Activated CD4-positive, alpha-beta memory T cell treated with anti-CD3 and anti-CD28 coated beads for 36 hours (primary cell): ENCODE measurements at regions of chr17 and their contacts with region 1.

Region 1: DNA sequence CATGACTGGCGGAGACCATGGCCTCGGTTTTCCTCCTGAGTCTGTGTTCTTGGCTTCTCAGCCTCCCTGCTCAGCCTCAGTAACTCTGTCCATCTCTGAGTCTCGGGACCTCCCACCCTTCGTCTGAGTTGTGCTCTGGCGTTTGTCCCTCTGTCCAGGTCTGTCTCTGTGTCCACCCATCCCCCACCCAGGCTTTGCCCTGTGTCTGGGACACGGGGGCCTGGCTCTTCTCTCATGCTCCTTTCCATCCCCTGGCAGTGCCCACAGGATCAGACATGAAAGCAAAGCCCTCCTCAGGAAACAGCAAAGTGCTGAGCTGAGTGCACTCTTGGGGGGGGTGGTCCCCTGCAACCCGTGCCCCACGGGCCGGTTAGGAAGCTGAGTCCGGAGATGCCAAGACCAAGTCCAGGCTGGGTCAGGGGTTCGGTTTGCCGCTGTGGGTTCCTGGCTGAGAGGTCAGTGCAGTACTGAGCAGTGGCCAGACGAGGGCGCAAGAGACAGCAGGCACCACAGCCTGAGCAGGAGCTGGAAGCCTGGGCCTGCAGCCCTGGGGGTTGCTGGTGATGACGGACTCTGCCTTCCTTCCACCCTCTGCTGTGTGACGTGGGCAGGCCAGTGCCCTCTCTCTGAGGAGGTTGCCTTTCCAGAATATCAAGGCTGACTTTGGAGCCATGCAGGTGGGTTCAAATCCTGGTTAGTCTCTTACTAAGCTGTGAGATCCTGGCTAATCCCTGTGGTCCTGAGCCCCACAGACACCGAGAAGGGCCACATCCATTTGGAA is 2.5 kb downstream of the P2RX1 start:
- DNase-seq: peak; percentile 89
- H3K4me3 Mint-ChIP-seq: no peak overlapping the region
- H3K27ac Mint-ChIP-seq: peak overlapping the region; percentile 54
- H3K4me1 Mint-ChIP-seq: peaks cover 39% of the 10 kb centered on the region
- H3K27me3 Mint-ChIP-seq: no peaks in the 10 kb centered on the region

Region 2: GRCh38 chr17:3845621-3846441 is 67.9 kb before region 1 on chr17 and contains the start of gene NCBP3:
- CTCF ChIA-PET with region 1: interaction called, 39 read pairs
- POLR2A ChIA-PET with region 1: no interaction called
- intact Hi-C with region 1: loop called (anchors 5 kb)
- DNase-seq: peak; percentile 93
- H3K4me3 Mint-ChIP-seq: peak within 1 kb of the TSS; percentile 94
- H3K27ac Mint-ChIP-seq: peak within 1 kb of the TSS; percentile 86
- H3K4me1 Mint-ChIP-seq: peaks cover 22% of the 10 kb centered on the region
- H3K27me3 Mint-ChIP-seq: no peaks in the 10 kb centered on the region
- total RNA-seq, gene NCBP3: 38.8 to 42.4 TPM

Region 3: GRCh38 chr17:3865176-3865575 is 48.5 kb before region 1 on chr17:
- CTCF ChIA-PET with region 1: interaction called, 17 read pairs
- POLR2A ChIA-PET with region 1: no interaction called
- intact Hi-C with region 1: loop called (anchors 5 kb)
- DNase-seq: no peak
- H3K4me3 Mint-ChIP-seq: no peak overlapping the region
- H3K27ac Mint-ChIP-seq: no peak overlapping the region
- H3K4me1 Mint-ChIP-seq: no peaks in the 10 kb centered on the region
- H3K27me3 Mint-ChIP-seq: no peaks in the 10 kb centered on the region

Region 4: GRCh38 chr17:3935140-3935542 is 21.4 kb after region 1 on chr17:
- CTCF ChIA-PET with region 1: interaction called, 10 read pairs
- POLR2A ChIA-PET with region 1: no interaction called
- intact Hi-C with region 1: no loop called
- DNase-seq: peak; percentile 40
- H3K4me3 Mint-ChIP-seq: no peak overlapping the region
- H3K27ac Mint-ChIP-seq: no peak overlapping the region
- H3K4me1 Mint-ChIP-seq: no peaks in the 10 kb centered on the region
- H3K27me3 Mint-ChIP-seq: no peaks in the 10 kb centered on the region

Region 5: DNA sequence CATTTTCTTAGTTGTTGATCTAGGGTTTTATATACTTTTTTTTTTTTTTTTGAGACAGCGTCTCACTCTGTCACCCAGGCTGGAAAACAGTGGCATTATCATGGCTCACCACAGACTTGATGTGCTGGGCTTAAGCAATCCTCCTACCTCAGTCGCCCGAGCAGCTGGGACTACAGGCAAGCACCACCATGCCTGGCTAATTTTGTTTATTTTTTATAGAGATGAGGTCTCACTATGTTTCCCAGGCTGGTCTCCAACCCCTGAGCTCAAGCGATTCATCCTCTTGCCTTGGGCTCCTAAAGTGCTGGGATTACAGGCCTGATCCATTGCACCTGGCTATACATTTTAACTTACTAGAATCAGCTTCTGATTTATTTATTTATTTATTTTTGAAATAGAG is 84.7 kb after region 1 on chr17:
- CTCF ChIA-PET with region 1: interaction called, 91 read pairs
- POLR2A ChIA-PET with region 1: no interaction called
- intact Hi-C with region 1: no loop called
- DNase-seq: no peak
- H3K4me3 Mint-ChIP-seq: no peak overlapping the region
- H3K27ac Mint-ChIP-seq: no peak overlapping the region
- H3K4me1 Mint-ChIP-seq: no peaks in the 10 kb centered on the region
- H3K27me3 Mint-ChIP-seq: peaks cover 8% of the 10 kb centered on the region

Region 6: GRCh38 chr17:4074831-4075495 is 161.2 kb after region 1 on chr17:
- CTCF ChIA-PET with region 1: interaction called, 19 read pairs
- POLR2A ChIA-PET with region 1: no interaction called
- intact Hi-C with region 1: loop called (anchors 1 kb)
- DNase-seq: no peak
- H3K4me3 Mint-ChIP-seq: no peak overlapping the region
- H3K27ac Mint-ChIP-seq: no peak overlapping the region
- H3K4me1 Mint-ChIP-seq: peaks cover 3% of the 10 kb centered on the region
- H3K27me3 Mint-ChIP-seq: no peaks in the 10 kb centered on the region